Naive thymus-derived CD4-positive, alpha-beta T cell (primary cell): ENCODE measurements at regions of chr19 and their contacts with region 1.

Region 1: GRCh38 chr19:10510301-10510802 is 6.9 kb downstream of the S1PR5 start:
- DNase-seq: peak in 8 of 9 donors; percentile 29 to 72 (median 52)
- ATAC-seq: peak; percentile 33
- H3K4me3 ChIP-seq: no peak overlapping the region
- H3K4me3 Mint-ChIP-seq: no peak overlapping the region
- H3K27ac ChIP-seq: no peak overlapping the region
- H3K27ac Mint-ChIP-seq: no peak overlapping the region
- H3K4me1 ChIP-seq: peaks cover 0 to 29% of the 10 kb centered on the region in 2 donors
- H3K4me1 Mint-ChIP-seq: peaks cover 8 to 25% (median 19%) of the 10 kb centered on the region in 7 donors
- H3K27me3 ChIP-seq: peaks cover 0 to 8% of the 10 kb centered on the region in 2 donors
- H3K27me3 Mint-ChIP-seq: peaks cover 16 to 34% (median 18%) of the 10 kb centered on the region in 5 donors

Region 2: GRCh38 chr19:10292206-10292788 is 218.1 kb before region 1 on chr19:
- CTCF ChIA-PET with region 1: no interaction called
- POLR2A ChIA-PET with region 1: no interaction called
- intact Hi-C with region 1: loop called in 1 of 2 experiments (anchors 5 kb)
- DNase-seq: peak in 8 of 9 donors; percentile 49 to 85 (median 54)
- ATAC-seq: peak; percentile 74
- H3K4me3 ChIP-seq: peak overlapping the region; percentile 54
- H3K4me3 Mint-ChIP-seq: peak overlapping the region; percentile 70 to 87 (median 80)
- H3K27ac ChIP-seq: no peak overlapping the region
- H3K27ac Mint-ChIP-seq: peak overlapping the region in 4 of 9 donors; percentile 34 to 88 (median 68)
- H3K4me1 ChIP-seq: peaks cover 62 to 66% of the 10 kb centered on the region in 2 donors
- H3K4me1 Mint-ChIP-seq: peaks cover 44 to 71% (median 60%) of the 10 kb centered on the region in 7 donors
- H3K27me3 ChIP-seq: peaks cover 8 to 55% of the 10 kb centered on the region in 2 donors
- H3K27me3 Mint-ChIP-seq: peaks cover 43 to 81% (median 52%) of the 10 kb centered on the region in 5 donors

Region 3: GRCh38 chr19:10551698-10552301 is 41.4 kb after region 1 on chr19:
- CTCF ChIA-PET with region 1: interaction called, 3 read pairs
- POLR2A ChIA-PET with region 1: no interaction called
- intact Hi-C with region 1: loop called (anchors 1 to 5 kb)
- DNase-seq: peak in 6 of 9 donors; percentile 23 to 42 (median 35)
- ATAC-seq: peak; percentile 24
- H3K4me3 ChIP-seq: no peak overlapping the region
- H3K4me3 Mint-ChIP-seq: peak overlapping the region in 2 of 10 donors; percentile 25 to 42
- H3K27ac ChIP-seq: peak overlapping the region; percentile 66
- H3K27ac Mint-ChIP-seq: peak overlapping the region; percentile 44 to 96 (median 76)
- H3K4me1 ChIP-seq: peaks cover 41 to 54% of the 10 kb centered on the region in 2 donors
- H3K4me1 Mint-ChIP-seq: peaks cover 22 to 63% (median 41%) of the 10 kb centered on the region in 7 donors
- H3K27me3 ChIP-seq: no peaks in the 10 kb centered on the region
- H3K27me3 Mint-ChIP-seq: no peaks in the 10 kb centered on the region

Region 4: DNA sequence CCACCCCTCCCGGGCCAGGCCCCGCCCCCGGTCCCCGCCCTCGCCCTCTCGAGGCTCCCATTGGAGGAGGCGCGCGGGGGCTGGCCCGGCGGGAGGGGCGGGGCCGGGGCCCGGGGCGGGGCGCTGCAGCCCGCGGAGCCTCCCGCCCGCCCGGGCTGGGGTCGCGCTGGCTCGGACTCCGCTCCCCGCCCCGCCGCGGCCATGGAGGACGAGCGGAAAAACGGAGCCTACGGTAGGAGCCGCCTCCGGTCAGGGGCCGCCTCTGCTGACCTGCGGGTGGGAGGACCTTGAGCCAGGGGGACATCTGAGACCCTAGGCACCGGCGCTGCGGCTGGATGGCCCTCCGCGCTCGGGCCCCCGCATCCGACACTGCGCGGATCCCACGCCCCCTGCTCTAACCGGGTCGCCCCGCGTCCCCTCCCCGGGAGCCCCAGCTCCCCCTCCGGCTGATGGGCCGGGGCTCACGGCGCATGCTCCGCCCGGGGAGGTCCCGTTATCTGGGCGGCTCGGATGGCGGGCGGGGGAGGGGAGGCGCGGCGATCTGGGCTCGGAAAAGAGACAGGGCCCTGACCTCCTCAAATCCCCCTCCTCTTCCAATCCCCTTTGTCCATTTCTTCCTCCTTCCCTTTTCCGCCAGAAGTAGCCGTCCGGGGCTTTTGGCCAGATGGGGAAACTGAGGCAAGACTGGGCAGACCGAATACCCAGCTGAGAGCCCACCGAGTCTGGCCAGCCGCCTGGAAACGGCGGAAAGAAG is 92.2 kb after region 1 on chr19:
- CTCF ChIA-PET with region 1: no interaction called
- POLR2A ChIA-PET with region 1: no interaction called
- intact Hi-C with region 1: no loop called
- DNase-seq: peak; percentile 73 to 89 (median 86)
- ATAC-seq: peak; percentile 93
- H3K4me3 ChIP-seq: peak overlapping the region; percentile 92
- H3K4me3 Mint-ChIP-seq: peak overlapping the region; percentile 97 to 100 (median 99)
- H3K27ac ChIP-seq: peak overlapping the region; percentile 100
- H3K27ac Mint-ChIP-seq: peak overlapping the region; percentile 94 to 100 (median 100)
- H3K4me1 ChIP-seq: peaks cover 15 to 20% of the 10 kb centered on the region in 2 donors
- H3K4me1 Mint-ChIP-seq: peaks cover 18 to 37% (median 31%) of the 10 kb centered on the region in 7 donors
- H3K27me3 ChIP-seq: no peaks in the 10 kb centered on the region
- H3K27me3 Mint-ChIP-seq: peaks cover 0 to 12% (median 0%) of the 10 kb centered on the region in 5 donors